WTC11 (cell line): ENCODE measurements at regions of chr3 and their contacts with region 1.

Region 1: DNA sequence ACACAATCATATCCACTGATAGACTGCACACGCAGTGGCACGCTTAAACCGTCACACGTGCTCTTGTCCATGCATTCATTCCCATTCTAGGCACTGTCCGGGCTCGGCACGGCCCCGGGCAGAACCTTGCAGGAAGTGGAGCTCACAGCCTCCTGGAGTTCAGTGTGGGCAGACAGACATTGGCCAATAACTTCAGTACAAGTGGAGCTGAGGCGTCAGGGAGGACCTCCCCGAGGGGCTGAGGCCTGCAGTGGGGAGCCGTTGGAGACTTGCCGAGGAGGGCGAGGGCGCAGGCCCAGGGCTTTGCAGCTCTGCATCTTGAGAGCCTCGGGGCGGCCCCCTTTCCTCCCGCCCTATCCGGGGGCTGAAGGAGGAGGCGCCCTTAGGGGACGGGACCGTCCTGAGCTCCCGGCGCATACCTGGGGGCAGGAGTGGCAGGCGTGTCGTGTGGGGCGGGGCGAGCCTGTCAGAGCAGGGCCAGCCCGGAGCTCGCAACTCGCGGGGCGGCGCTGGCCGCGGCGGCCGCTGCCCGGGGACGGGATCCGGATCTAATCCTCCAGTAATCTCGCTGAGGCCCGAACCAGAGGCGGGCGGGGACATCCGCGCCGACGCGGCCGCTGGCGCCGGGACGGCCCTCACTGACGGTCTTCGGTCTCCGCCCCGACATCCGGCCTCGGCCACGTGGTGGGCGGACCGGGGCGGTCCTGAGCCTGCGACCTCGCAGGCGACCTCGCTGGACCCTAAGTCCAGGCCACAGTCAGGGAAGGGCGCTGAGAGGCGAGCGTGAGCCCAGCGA is at the start of gene ACY1:
- DNase-seq: peak; percentile 85
- ATAC-seq: peak; percentile 78
- H3K4me3 Mint-ChIP-seq: peak within 1 kb of the TSS; percentile 84
- H3K27ac Mint-ChIP-seq: peak within 1 kb of the TSS; percentile 96
- H3K4me1 Mint-ChIP-seq: peaks cover 21% of the 10 kb centered on the region
- H3K27me3 Mint-ChIP-seq: peaks cover 3% of the 10 kb centered on the region; the same call in 1 of the 2 replicates
- CTCF ChIP-seq: 0 out of 2 replicates have a peak, but pooled peaks have one; percentile 1
- total RNA-seq, gene ACY1: 53.8 to 66.3 TPM (median 61.6 TPM) in 3 replicates

Region 2: DNA sequence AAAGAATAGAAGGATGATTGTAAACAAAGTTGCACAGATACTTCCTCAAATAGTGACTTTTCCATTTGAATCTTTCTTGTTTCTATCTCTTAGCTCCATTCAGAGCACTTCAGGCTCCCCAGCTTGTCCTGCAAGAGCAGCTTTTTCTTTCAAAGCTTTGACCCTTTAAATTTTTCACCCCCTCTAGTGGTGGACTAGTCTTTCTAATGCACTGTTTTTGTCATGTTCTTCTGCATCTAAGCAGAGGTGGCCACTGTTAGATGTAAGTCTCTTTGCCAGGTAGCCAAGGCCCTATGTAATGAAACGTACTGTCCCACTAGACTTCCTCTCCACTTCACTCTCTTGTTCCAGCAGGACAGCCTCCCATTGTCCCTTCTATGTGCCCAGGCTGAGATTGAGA is 671.9 kb before region 1 on chr3:
- CTCF ChIA-PET with region 1: no interaction called
- POLR2A ChIA-PET with region 1: no interaction called
- DNase-seq: no peak
- ATAC-seq: peak; percentile 51
- H3K4me3 Mint-ChIP-seq: no peak overlapping the region
- H3K27ac Mint-ChIP-seq: no peak overlapping the region
- H3K4me1 Mint-ChIP-seq: no peaks in the 10 kb centered on the region
- H3K27me3 Mint-ChIP-seq: no peaks in the 10 kb centered on the region
- CTCF ChIP-seq: no peak

Region 3: DNA sequence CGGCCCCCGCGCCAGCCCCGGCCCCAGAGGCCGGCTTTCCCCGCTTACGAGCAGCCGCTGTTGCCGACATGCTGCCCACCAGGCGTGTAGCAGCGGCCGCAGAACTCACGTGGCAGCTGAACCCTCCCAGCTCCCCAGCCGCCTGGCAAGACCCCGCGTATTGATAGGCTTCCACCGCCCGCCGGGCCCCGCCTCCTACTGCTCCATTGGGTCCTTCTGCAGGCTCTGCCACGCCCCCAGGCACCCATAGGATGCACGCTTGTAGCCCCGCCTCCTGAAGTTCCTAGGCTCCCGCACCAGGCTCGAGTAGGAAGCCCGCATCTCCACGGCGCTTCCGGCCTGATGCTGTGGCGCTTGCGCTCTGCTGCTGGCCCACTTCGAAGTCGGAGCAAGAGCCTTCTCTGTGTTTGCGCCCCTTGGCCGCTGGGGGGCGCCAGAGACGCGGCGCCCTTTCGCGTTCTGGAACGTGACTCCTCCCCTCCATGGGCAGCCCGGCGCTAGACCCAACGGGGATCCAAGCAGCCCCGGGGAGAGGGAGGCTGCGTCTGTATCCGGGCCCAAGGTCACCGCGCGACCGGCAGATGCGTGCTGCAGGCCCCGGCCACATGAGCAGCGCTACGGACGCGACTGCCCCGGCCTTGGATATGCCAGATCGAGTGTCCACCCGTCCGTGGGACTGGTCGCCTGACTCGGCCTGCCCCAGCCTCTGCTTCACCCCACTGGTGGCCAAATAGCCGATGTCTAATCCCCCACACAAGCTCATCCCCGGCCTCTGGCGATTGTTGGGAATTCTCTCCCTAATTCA is 41.0 kb before region 1 on chr3 and contains the starts of genes PARP3 and RRP9:
- CTCF ChIA-PET with region 1: interaction called, 25 read pairs
- POLR2A ChIA-PET with region 1: interaction called, 5 read pairs
- DNase-seq: peak; percentile 100
- ATAC-seq: peak; percentile 96
- H3K4me3 Mint-ChIP-seq: peak within 1 kb of the TSS; percentile 91
- H3K27ac Mint-ChIP-seq: no peak within 1 kb of the TSS
- H3K4me1 Mint-ChIP-seq: peaks cover 17% of the 10 kb centered on the region
- H3K27me3 Mint-ChIP-seq: no peaks in the 10 kb centered on the region; the same call in 1 of the 2 replicates
- CTCF ChIP-seq: peak; percentile 99
- total RNA-seq, gene PARP3: 2.8 to 2.9 TPM (median 2.8 TPM) in 3 replicates
- total RNA-seq, gene RRP9: 47.0 to 49.9 TPM (median 49.4 TPM) in 3 replicates

Region 4: DNA sequence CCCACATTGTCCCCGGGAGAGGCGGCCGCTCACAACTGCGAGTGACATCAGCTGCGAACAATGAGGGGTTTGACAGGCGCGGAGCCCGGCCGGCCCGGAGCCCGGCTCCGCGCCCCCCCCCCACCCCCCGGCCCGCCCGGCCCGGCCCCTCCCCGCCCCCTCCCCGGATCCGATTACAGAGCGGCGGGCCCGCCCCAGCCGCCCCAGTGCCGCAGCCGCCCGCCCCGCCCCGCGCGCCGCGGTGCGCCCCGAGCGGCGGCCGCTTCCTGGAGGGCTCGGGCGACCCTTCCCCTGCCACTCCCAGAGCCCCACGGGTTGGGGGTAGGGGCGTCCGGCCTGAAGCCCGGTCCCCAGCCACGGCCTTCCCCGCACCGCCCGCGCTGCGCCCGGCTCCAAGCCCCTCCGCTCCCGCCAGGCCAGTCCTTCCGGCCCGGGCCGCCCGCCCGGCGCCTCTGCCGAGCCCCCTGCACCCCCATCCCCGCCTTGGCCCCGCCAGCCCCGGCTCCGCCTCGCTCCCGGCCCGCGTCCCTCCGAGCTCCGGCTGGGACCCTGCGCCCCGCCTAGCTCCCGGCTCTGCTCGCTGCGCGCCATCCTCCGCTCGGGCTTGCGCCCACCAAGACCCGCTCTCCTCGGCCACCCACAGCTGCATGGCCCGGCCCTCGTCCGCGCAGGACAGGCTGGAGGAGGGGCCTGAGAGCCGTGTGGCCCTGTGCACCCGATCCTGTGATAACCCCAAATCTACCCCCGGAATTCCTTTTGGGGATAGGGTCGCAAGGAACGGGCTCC is 15.4 kb before region 1 on chr3 and contains the start of gene PCBP4:
- CTCF ChIA-PET with region 1: interaction called, 60 read pairs
- POLR2A ChIA-PET with region 1: interaction called, 23 read pairs
- DNase-seq: peak; percentile 69
- ATAC-seq: peak; percentile 40
- H3K4me3 Mint-ChIP-seq: peak within 1 kb of the TSS; percentile 81
- H3K27ac Mint-ChIP-seq: no peak within 1 kb of the TSS; the same call in 1 of the 2 replicates
- H3K4me1 Mint-ChIP-seq: peaks cover 49% of the 10 kb centered on the region
- H3K27me3 Mint-ChIP-seq: peaks cover 22% of the 10 kb centered on the region
- CTCF ChIP-seq: no peak
- total RNA-seq, gene PCBP4: 28.7 to 31.6 TPM (median 30.6 TPM) in 3 replicates

Region 5: DNA sequence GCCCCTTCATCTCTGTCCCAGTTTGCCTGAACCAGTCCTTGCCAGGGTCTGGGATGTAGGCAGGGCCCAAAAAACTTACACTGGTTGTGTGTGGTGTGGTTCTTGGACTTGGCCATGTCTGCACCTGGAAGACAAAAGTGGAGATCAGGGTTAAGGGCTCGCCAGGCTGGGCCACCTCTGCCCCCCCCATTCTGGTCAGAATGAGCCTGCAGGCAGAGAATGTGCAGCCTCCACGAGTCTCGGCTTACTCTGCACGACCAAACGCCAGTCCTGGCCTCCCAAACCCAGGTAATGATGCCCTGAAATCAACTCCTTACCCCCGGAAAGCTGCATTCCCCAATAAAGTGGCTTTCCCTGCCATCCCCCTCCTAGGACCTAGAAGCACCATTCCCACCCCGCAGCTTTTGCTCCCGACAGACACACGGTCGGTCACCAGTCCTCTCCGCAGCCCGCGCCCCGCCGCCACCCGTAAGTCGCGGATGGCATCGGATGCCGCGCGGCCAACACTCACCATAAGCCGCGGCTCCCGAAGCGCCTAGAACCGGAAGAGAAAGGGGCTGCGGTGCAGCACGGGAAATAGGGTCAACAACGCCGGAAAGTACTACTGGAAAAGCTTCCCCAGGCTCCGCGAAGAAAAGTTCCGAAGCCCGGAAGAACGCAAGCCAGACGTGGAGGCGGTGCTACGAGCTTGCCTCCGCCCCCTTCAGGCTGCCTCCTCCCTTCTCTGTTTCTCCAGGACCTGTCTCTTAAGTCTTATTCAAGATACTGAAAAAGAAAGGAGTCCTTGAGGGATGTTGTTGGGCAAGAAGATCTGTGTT is 12.6 kb after region 1 on chr3 and contains the start of gene RPL29:
- CTCF ChIA-PET with region 1: interaction called, 36 read pairs
- POLR2A ChIA-PET with region 1: interaction called, 14 read pairs
- DNase-seq: peak; percentile 92
- ATAC-seq: peak; percentile 85
- H3K4me3 Mint-ChIP-seq: peak within 1 kb of the TSS; percentile 99
- H3K27ac Mint-ChIP-seq: peak within 1 kb of the TSS; percentile 100
- H3K4me1 Mint-ChIP-seq: peaks cover 33% of the 10 kb centered on the region
- H3K27me3 Mint-ChIP-seq: no peaks in the 10 kb centered on the region
- CTCF ChIP-seq: no peak
- total RNA-seq, gene RPL29: 1,343 to 1,592 TPM (median 1,542 TPM) in 3 replicates